ENCODE measurements at regions of chr15 and their contacts with region 1.

Region 1: DNA sequence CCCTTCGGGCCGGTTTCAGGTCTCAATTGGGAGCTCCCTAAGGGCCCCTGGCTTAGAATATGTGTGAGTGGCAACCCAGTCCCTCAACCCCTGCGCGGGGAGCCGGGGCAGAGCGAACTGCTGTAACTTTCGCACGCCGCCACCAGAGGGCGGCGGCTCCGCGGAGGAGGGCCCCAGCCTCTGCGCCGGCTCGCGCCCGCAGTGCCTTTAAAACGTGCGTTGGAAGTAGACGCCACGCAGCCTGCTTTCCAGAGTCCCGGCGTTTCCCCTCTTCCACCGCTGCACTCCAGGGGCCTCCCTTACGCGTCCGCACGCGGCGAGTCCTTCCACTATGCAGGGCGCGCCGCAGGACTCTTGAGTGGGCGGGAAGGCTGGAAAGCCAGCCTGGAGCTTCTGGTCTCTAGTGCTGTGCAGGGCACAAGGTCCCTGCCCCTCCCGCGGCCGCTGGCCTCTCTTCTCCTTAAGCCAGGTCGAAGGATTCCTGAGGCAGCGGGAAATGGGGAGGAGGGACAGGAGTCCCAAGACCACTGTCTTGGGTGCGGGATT is 23.7 kb upstream of the RNU6-1 start:
- DNase-seq: peak; percentile 91
- H3K27ac ChIP-seq: peak overlapping the region; percentile 37
- CTCF ChIP-seq: peak; percentile 98

Region 2: GRCh38 chr15:67741308-67741707 is 122.2 kb before region 1 on chr15:
- CTCF ChIA-PET with region 1: no interaction called
- POLR2A ChIA-PET with region 1: no interaction called
- DNase-seq: peak; percentile 5
- H3K27ac ChIP-seq: no peak overlapping the region
- CTCF ChIP-seq: no peak

Region 3: GRCh38 chr15:68154923-68155559 is 291.5 kb after region 1 on chr15:
- CTCF ChIA-PET with region 1: interaction called, 37 read pairs
- POLR2A ChIA-PET with region 1: no interaction called
- DNase-seq: peak; percentile 35
- H3K27ac ChIP-seq: no peak overlapping the region
- CTCF ChIP-seq: peak; percentile 90

Measured in RWPE1 (cell line).